Common myeloid progenitor, CD34-positive (primary cell): ENCODE measurements at regions of chr1 and their contacts with region 1.

Region 1: DNA sequence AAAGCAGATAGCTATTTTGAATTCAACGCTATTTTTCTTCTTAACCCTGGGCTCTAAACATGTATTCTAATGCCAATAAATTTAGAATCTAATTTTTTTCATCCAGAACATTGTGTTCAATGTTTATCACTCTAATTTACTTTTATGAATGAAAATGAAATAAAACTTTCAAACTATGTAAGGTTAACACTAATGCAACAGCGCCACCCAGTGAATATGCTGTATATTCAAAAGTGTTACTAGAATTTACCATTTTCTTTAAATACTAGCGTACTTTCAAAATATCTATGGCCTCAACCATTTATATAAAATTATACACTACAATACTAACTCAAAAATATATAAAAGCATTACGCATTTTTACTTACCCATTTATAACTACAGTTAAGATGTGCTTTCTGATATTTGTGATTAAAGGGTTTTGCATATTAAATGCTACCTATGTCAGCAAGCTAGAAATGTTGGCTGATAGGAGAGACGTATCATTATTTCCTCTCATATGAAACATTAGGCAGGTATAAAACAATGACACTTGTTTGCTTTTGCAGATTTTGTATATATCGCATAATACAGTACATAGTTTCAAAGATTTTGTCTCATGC is 5.9 kb upstream of the NUF2 start:
- DNase-seq: peak; percentile 51 to 77 (median 70)
- H3K4me3 ChIP-seq: no peak overlapping the region
- H3K27ac ChIP-seq: no peak overlapping the region
- H3K4me1 ChIP-seq: peaks cover 3 to 7% (median 3%) of the 10 kb centered on the region in 4 experiments
- H3K27me3 ChIP-seq: no peaks in the 10 kb centered on the region

Region 2: GRCh38 chr1:162847839-162848453 is 467.9 kb before region 1 on chr1:
- CTCF ChIA-PET with region 1: interaction called, 32 read pairs
- POLR2A ChIA-PET with region 1: no interaction called
- DNase-seq: peak; percentile 72 to 85 (median 76)
- H3K4me3 ChIP-seq: no peak overlapping the region
- H3K27ac ChIP-seq: no peak overlapping the region
- H3K4me1 ChIP-seq: no peaks in the 10 kb centered on the region
- H3K27me3 ChIP-seq: peaks cover 0 to 6% (median 0%) of the 10 kb centered on the region in 5 experiments

Region 3: GRCh38 chr1:162854245-162854882 is 461.5 kb before region 1 on chr1:
- CTCF ChIA-PET with region 1: interaction called, 32 read pairs
- POLR2A ChIA-PET with region 1: no interaction called
- DNase-seq: peak; percentile 66 to 68 (median 67)
- H3K4me3 ChIP-seq: no peak overlapping the region
- H3K27ac ChIP-seq: no peak overlapping the region
- H3K4me1 ChIP-seq: no peaks in the 10 kb centered on the region
- H3K27me3 ChIP-seq: peaks cover 0 to 1% (median 0%) of the 10 kb centered on the region in 5 experiments

Region 4: GRCh38 chr1:163069142-163069541 is 246.7 kb before region 1 on chr1 and contains the start of gene RGS4:
- CTCF ChIA-PET with region 1: interaction called, 10 read pairs
- POLR2A ChIA-PET with region 1: no interaction called
- DNase-seq: peak; percentile 2 to 28 (median 20)
- H3K4me3 ChIP-seq: no peak within 1 kb of the TSS
- H3K27ac ChIP-seq: no peak within 1 kb of the TSS
- H3K4me1 ChIP-seq: no peaks in the 10 kb centered on the region
- H3K27me3 ChIP-seq: peaks cover 12 to 54% (median 19%) of the 10 kb centered on the region in 5 experiments